B cell (primary cell): ENCODE measurements at regions of chr5 and their contacts with region 1.

Region 1: GRCh38 chr5:142012792-142013388 is at the start of gene GNPDA1:
- DNase-seq: peak; percentile 83
- ATAC-seq: peak; percentile 88
- H3K4me3 ChIP-seq: peak within 1 kb of the TSS; percentile 44 to 74 (median 67)
- H3K4me3 Mint-ChIP-seq: peak within 1 kb of the TSS; percentile 89
- H3K27ac ChIP-seq: peak within 1 kb of the TSS; percentile 45 to 59
- H3K27ac Mint-ChIP-seq: peak within 1 kb of the TSS; percentile 78
- H3K4me1 ChIP-seq: peaks cover 27 to 30% of the 10 kb centered on the region in 2 donors
- H3K4me1 Mint-ChIP-seq: peaks cover 43% of the 10 kb centered on the region
- H3K27me3 ChIP-seq: no peaks in the 10 kb centered on the region
- H3K27me3 Mint-ChIP-seq: peaks cover 3% of the 10 kb centered on the region
- CTCF ChIP-seq: no peak
- total RNA-seq, gene GNPDA1: 12.1 and 15.0 TPM in 2 replicates

Region 2: DNA sequence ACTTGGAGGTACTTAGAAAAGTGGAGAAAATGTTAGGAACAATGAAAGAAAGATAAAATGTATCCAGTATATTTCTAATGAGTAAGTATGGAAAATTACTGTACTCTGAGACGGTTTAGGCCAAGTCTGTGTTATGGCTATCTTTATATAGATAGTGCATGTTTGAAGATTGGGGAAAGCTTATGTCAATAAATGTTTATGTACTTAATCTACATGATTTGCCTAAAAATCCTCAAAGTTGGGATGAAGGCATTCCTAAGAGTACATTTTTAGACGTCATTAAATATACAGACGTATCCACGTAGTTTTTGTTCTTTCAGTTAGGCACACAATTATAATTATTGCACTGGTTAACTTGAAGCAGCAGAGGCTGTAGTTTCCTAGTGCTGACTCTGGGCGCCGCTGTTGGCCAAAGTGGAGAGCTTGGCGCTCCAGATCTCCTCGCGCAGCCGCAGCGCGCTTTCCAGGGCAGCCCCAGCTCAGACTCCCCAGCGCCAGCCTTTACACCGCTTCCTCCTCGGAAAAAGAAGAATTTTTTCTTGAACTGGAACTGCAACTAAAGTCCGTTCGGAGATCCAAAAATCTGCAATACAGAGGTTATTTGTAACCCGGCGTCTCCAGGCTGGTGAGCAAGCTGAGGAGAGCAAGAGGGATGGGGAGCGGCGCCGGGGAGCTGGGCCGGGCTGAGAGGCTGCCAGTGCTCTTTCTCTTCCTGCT is 625.5 kb before region 1 on chr5 and contains the start of gene PCDHGB4:
- CTCF ChIA-PET with region 1: no interaction called
- POLR2A ChIA-PET with region 1: no interaction called
- intact Hi-C with region 1: no loop called
- DNase-seq: peak; percentile 8
- ATAC-seq: peak; percentile 65
- H3K4me3 ChIP-seq: no peak within 1 kb of the TSS
- H3K4me3 Mint-ChIP-seq: peak within 1 kb of the TSS; percentile 45
- H3K27ac ChIP-seq: no peak within 1 kb of the TSS
- H3K27ac Mint-ChIP-seq: no peak within 1 kb of the TSS
- H3K4me1 ChIP-seq: no peaks in the 10 kb centered on the region
- H3K4me1 Mint-ChIP-seq: peaks cover 3% of the 10 kb centered on the region
- H3K27me3 ChIP-seq: peaks cover 0 to 61% (median 37%) of the 10 kb centered on the region in 4 experiments
- H3K27me3 Mint-ChIP-seq: peaks cover 63% of the 10 kb centered on the region
- CTCF ChIP-seq: peak; percentile 24
- total RNA-seq, gene PCDHGB4: 1.6 and 1.8 TPM in 2 replicates

Region 3: DNA sequence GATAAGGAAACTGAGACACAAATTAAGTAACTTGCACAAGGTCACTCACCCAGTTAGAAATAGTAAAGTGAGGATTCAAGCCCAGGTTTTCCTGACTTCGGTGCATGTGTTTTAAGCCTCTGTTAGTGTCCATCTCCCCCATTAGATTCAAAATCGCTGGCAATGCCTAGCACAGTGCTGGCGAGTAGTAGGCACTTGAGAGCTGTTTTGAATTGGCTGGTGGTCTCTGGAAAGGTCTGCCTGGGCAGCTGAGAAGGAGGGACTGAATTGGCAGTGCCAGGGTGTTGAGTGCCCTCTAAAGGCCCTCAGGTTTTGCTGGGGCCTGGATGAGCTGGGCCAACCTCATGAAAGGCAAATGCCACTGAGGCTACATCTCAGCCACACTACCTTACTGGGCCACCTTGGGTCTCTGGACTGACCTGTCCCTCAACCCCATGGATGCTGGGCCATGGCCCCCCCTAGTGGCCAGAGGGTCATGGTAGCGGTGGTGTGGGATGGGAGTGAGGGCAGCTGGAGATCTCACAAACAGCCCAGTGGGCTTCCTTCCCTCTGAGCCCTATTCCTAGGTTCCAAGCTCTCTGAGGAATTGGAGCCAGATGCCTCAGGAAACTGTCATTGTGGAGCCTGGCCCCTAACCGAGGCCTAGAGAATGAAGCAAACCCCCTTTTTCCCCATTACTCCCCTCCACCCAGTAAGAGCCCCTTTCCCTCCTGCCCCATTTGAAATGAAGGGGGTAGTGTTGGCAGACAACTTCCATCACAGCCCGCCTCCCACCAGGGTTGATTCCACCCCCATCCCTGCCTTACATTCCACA is 198.9 kb before region 1 on chr5:
- CTCF ChIA-PET with region 1: no interaction called
- POLR2A ChIA-PET with region 1: no interaction called
- intact Hi-C with region 1: no loop called
- DNase-seq: peak; percentile 21
- ATAC-seq: peak; percentile 41
- H3K4me3 ChIP-seq: no peak overlapping the region
- H3K4me3 Mint-ChIP-seq: no peak overlapping the region
- H3K27ac ChIP-seq: no peak overlapping the region
- H3K27ac Mint-ChIP-seq: no peak overlapping the region
- H3K4me1 ChIP-seq: no peaks in the 10 kb centered on the region
- H3K4me1 Mint-ChIP-seq: no peaks in the 10 kb centered on the region
- H3K27me3 ChIP-seq: peaks cover 0 to 28% (median 4%) of the 10 kb centered on the region in 4 experiments
- H3K27me3 Mint-ChIP-seq: peaks cover 53% of the 10 kb centered on the region
- CTCF ChIP-seq: peak; percentile 21

Region 4: GRCh38 chr5:141992349-141992963 is 20.4 kb before region 1 on chr5:
- CTCF ChIA-PET with region 1: interaction called, 91 read pairs
- POLR2A ChIA-PET with region 1: no interaction called
- intact Hi-C with region 1: loop called (anchors 1 kb)
- DNase-seq: peak; percentile 77
- ATAC-seq: peak; percentile 72
- H3K4me3 ChIP-seq: no peak overlapping the region
- H3K4me3 Mint-ChIP-seq: no peak overlapping the region
- H3K27ac ChIP-seq: no peak overlapping the region
- H3K27ac Mint-ChIP-seq: no peak overlapping the region
- H3K4me1 ChIP-seq: no peaks in the 10 kb centered on the region
- H3K4me1 Mint-ChIP-seq: no peaks in the 10 kb centered on the region
- H3K27me3 ChIP-seq: no peaks in the 10 kb centered on the region
- H3K27me3 Mint-ChIP-seq: no peaks in the 10 kb centered on the region
- CTCF ChIP-seq: peak; percentile 90

Region 5: GRCh38 chr5:142024771-142025304 is 11.9 kb after region 1 on chr5:
- CTCF ChIA-PET with region 1: interaction called, 40 read pairs
- POLR2A ChIA-PET with region 1: no interaction called
- intact Hi-C with region 1: loop called (anchors 1 kb)
- DNase-seq: peak; percentile 85
- ATAC-seq: peak; percentile 100
- H3K4me3 ChIP-seq: peak overlapping the region; percentile 38 to 63 (median 53)
- H3K4me3 Mint-ChIP-seq: peak overlapping the region; percentile 86
- H3K27ac ChIP-seq: peak overlapping the region; percentile 59 to 76
- H3K27ac Mint-ChIP-seq: peak overlapping the region; percentile 92
- H3K4me1 ChIP-seq: peaks cover 8 to 9% of the 10 kb centered on the region in 2 donors
- H3K4me1 Mint-ChIP-seq: peaks cover 12% of the 10 kb centered on the region
- H3K27me3 ChIP-seq: peaks cover 0 to 9% (median 5%) of the 10 kb centered on the region in 4 experiments
- H3K27me3 Mint-ChIP-seq: peaks cover 26% of the 10 kb centered on the region
- CTCF ChIP-seq: no peak

Region 6: DNA sequence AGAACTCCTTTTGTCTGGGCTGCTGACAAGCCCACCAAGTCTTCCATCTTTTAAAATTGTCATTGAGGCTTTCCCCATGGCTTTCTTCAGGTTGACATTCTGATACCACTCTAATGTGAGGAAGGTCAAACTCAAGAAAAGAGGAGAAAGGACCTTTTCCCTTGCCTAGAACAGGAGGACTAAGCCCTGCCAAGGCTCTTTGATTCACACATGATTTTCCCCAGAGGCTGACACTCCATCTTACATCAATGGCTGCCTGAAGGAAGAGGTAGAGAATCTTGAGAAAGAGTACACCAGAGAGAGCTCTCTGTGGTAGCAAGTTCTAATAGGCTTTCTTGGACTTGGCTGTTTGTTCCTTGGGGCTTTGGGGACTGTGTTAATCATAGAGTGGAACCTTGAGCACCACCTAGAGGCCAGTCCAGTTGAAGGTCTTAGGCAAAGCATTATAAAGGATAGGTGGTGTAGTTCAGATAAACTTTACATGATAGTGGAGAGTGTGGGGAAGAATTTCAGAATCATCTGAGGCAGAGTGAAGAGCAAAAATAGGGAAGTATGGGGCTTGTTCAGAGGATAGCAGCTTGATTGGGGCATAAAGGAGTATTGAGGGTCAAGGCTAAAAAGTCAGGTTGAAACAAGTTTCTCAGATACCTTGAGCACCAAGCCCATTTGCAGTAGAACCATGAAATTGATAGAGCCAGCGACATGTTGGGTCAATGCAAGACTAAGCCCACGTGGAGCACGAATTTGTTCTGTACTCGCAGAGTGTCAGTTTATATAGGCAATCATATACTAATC is 132.4 kb after region 1 on chr5:
- CTCF ChIA-PET with region 1: interaction called, 33 read pairs
- POLR2A ChIA-PET with region 1: no interaction called
- intact Hi-C with region 1: loop called (anchors 1 kb)
- DNase-seq: peak; percentile 59
- ATAC-seq: peak; percentile 70
- H3K4me3 ChIP-seq: no peak overlapping the region
- H3K4me3 Mint-ChIP-seq: no peak overlapping the region
- H3K27ac ChIP-seq: no peak overlapping the region
- H3K27ac Mint-ChIP-seq: no peak overlapping the region
- H3K4me1 ChIP-seq: no peaks in the 10 kb centered on the region
- H3K4me1 Mint-ChIP-seq: no peaks in the 10 kb centered on the region
- H3K27me3 ChIP-seq: no peaks in the 10 kb centered on the region
- H3K27me3 Mint-ChIP-seq: no peaks in the 10 kb centered on the region
- CTCF ChIP-seq: peak; percentile 74